Activated CD4-positive, alpha-beta T cell treated with anti-CD3 and anti-CD28 coated beads, Interleukin-2, amount 10 ng/mL, durations not matched to agents 24 days and 14 days (primary cell): ENCODE measurements at regions of chr16 and their contacts with region 1.

Region 1: GRCh38 chr16:69796351-69797118 is 34.4 kb downstream of the WWP2 start:
- DNase-seq: peak; percentile 72
- H3K4me3 Mint-ChIP-seq: no peak overlapping the region
- H3K27ac Mint-ChIP-seq: no peak overlapping the region
- H3K4me1 Mint-ChIP-seq: no peaks in the 10 kb centered on the region
- H3K27me3 Mint-ChIP-seq: no peaks in the 10 kb centered on the region

Region 2: GRCh38 chr16:69930117-69930776 is 133.7 kb after region 1 on chr16:
- intact Hi-C with region 1: loop called (anchors 1 kb)
- DNase-seq: peak; percentile 85
- H3K4me3 Mint-ChIP-seq: no peak overlapping the region
- H3K27ac Mint-ChIP-seq: no peak overlapping the region
- H3K4me1 Mint-ChIP-seq: no peaks in the 10 kb centered on the region
- H3K27me3 Mint-ChIP-seq: no peaks in the 10 kb centered on the region

Region 3: DNA sequence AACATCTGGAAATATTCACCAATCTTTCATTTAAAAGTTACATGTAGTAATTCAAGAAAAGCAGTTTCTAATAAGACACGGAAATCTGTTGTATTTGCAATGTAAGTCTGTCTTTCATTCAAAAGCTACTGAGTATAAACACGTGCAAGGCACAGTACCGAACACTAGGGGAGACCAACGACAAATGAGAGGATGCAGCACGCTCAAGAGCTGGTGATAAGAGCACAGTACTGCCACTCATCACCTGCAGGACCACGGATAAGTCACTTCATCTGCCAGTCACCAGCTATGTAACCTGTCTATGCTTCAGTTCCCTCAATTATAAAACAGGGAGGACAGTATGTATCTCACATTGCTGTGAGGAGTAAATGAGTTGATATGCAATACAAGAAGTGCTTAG is 221.7 kb after region 1 on chr16:
- intact Hi-C with region 1: no loop called
- DNase-seq: peak; percentile 81
- H3K4me3 Mint-ChIP-seq: no peak overlapping the region
- H3K27ac Mint-ChIP-seq: no peak overlapping the region
- H3K4me1 Mint-ChIP-seq: no peaks in the 10 kb centered on the region
- H3K27me3 Mint-ChIP-seq: no peaks in the 10 kb centered on the region